ENCODE measurements at regions of chr13 and their contacts with region 1.

Region 1: GRCh38 chr13:110593430-110594130 is 21.8 kb upstream of the NAXD start:
- DNase-seq: peak; percentile 48 to 64 (median 63)
- H3K4me3 ChIP-seq: no peak overlapping the region
- H3K4me3 Mint-ChIP-seq: no peak overlapping the region
- H3K27ac ChIP-seq: no peak overlapping the region
- H3K27ac Mint-ChIP-seq: peak overlapping the region in 1 of 7 donors; percentile 66
- H3K4me1 ChIP-seq: no peaks in the 10 kb centered on the region
- H3K4me1 Mint-ChIP-seq: no peaks in the 10 kb centered on the region
- H3K27me3 ChIP-seq: no peaks in the 10 kb centered on the region
- H3K27me3 Mint-ChIP-seq: peaks cover 0 to 3% (median 2%) of the 10 kb centered on the region in 3 donors
- CTCF ChIP-seq: peak; percentile 76

Region 2: DNA sequence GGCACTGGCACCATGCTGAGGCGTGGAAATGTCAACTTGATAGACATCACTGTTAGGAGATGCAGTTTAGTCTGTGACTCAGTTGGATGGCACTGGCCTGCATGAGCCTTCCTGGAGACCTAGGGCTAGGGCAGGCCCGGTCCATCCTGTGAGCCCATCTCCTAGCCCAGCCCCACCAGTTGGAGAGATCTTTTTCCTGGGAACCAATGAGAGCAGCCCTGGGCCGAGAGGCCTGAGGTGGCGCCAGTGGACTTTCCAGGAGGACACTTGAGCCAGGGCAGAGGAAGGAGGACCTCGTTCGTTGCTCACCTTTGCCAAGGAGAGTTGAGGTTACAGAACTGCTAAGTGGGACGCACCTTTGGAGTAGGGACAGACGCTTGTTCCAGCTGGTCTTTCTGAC is 626.4 kb after region 1 on chr13:
- intact Hi-C with region 1: loop called (anchors 5 to 10 kb)
- DNase-seq: no peak
- H3K4me3 ChIP-seq: no peak overlapping the region
- H3K4me3 Mint-ChIP-seq: no peak overlapping the region
- H3K27ac ChIP-seq: no peak overlapping the region
- H3K27ac Mint-ChIP-seq: peak overlapping the region in 3 of 7 donors; percentile 4 to 62 (median 52)
- H3K4me1 ChIP-seq: no peaks in the 10 kb centered on the region
- H3K4me1 Mint-ChIP-seq: no peaks in the 10 kb centered on the region
- H3K27me3 ChIP-seq: no peaks in the 10 kb centered on the region
- H3K27me3 Mint-ChIP-seq: no peaks in the 10 kb centered on the region
- CTCF ChIP-seq: no peak

Region 3: GRCh38 chr13:111228262-111229144 is 634.9 kb after region 1 on chr13:
- intact Hi-C with region 1: loop called (anchors 5 to 10 kb)
- DNase-seq: no peak
- H3K4me3 ChIP-seq: no peak overlapping the region
- H3K4me3 Mint-ChIP-seq: no peak overlapping the region
- H3K27ac ChIP-seq: no peak overlapping the region
- H3K27ac Mint-ChIP-seq: peak overlapping the region in 1 of 7 donors; percentile 32
- H3K4me1 ChIP-seq: no peaks in the 10 kb centered on the region
- H3K4me1 Mint-ChIP-seq: no peaks in the 10 kb centered on the region
- H3K27me3 ChIP-seq: no peaks in the 10 kb centered on the region
- H3K27me3 Mint-ChIP-seq: no peaks in the 10 kb centered on the region
- CTCF ChIP-seq: no peak

Region 4: GRCh38 chr13:111505175-111505777 is 911.7 kb after region 1 on chr13:
- intact Hi-C with region 1: no loop called
- DNase-seq: no peak
- H3K4me3 ChIP-seq: no peak overlapping the region
- H3K4me3 Mint-ChIP-seq: no peak overlapping the region
- H3K27ac ChIP-seq: no peak overlapping the region
- H3K27ac Mint-ChIP-seq: no peak overlapping the region
- H3K4me1 ChIP-seq: no peaks in the 10 kb centered on the region
- H3K4me1 Mint-ChIP-seq: no peaks in the 10 kb centered on the region
- H3K27me3 ChIP-seq: no peaks in the 10 kb centered on the region
- H3K27me3 Mint-ChIP-seq: peaks cover 3 to 9% (median 9%) of the 10 kb centered on the region in 3 donors
- CTCF ChIP-seq: no peak